Sigmoid colon (tissue), 7 donors: ENCODE measurements at regions of chr17 and their contacts with region 1.

Region 1: GRCh38 chr17:75904749-75905521 is at the start of gene MRPL38:
- DNase-seq: peak; percentile 97
- H3K4me3 ChIP-seq: peak within 1 kb of the TSS; percentile 71 to 83 (median 81)
- H3K27ac ChIP-seq: peak within 1 kb of the TSS; percentile 86 to 93 (median 90)
- H3K4me1 ChIP-seq: peaks cover 0 to 19% (median 13%) of the 10 kb centered on the region in 4 donors
- H3K27me3 ChIP-seq: no peaks in the 10 kb centered on the region
- CTCF ChIP-seq: peak; percentile 96 to 99 (median 98)
- EP300 ChIP-seq: no peak
- POLR2A ChIP-seq: peak in 1 of 2 donors; percentile 50
- total RNA-seq, gene MRPL38: 32.8 to 50.6 (median 41.8) TPM

Region 2: GRCh38 chr17:75877752-75878173 is 27.2 kb before region 1 on chr17:
- intact Hi-C with region 1: no loop called
- DNase-seq: peak; percentile 88
- H3K4me3 ChIP-seq: peak overlapping the region; percentile 62 to 92 (median 80)
- H3K27ac ChIP-seq: peak overlapping the region; percentile 95 to 98 (median 97)
- H3K4me1 ChIP-seq: peaks cover 5 to 50% (median 46%) of the 10 kb centered on the region in 4 donors
- H3K27me3 ChIP-seq: no peaks in the 10 kb centered on the region
- CTCF ChIP-seq: peak; percentile 29 to 60 (median 44)
- EP300 ChIP-seq: no peak
- POLR2A ChIP-seq: no peak

Region 3: DNA sequence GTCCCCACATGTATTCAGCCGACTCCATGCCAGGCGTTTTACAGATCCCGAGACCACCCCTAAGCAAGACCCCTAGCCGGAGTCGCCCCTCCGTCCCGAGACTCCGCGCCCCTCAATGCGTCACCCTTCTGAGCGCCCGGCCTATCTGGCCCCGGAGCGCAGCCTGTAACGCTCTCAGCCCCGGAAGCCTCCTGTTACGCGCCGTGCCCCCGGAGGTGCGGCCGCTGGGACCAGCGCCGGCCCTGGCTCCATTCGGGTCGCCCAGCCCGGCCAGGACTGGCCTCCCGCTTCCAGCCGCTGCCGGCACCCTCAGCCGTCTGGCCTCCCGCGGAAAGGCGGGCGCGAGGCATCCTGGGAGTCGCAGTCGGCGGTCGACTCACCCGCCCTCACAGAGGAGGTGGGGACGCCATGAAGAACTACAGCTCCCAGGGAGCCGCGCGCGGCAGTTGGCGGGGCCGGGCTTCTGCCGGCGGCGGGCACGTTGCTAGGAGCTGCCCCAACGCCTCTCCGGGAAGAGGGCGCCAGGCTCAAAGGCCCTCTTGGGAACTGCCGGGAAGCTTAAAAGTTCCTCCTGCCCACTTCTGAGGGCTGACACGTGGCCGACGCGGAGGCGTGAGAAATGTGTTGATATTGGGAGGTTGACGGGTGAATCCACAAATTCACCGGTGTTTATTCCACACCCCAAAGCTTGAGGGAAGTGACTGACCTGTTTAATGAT is 35.9 kb after region 1 on chr17 and contains the start of gene FBF1:
- intact Hi-C with region 1: loop called (anchors 2 kb)
- DNase-seq: peak; percentile 96
- H3K4me3 ChIP-seq: peak within 1 kb of the TSS; percentile 50 to 96 (median 77)
- H3K27ac ChIP-seq: peak within 1 kb of the TSS; percentile 67 to 83 (median 80)
- H3K4me1 ChIP-seq: peaks cover 0 to 15% (median 14%) of the 10 kb centered on the region in 4 donors
- H3K27me3 ChIP-seq: no peaks in the 10 kb centered on the region
- CTCF ChIP-seq: no peak
- EP300 ChIP-seq: no peak
- POLR2A ChIP-seq: peak; percentile 58 to 72
- total RNA-seq, gene FBF1: 4.4 to 16.6 (median 6.3) TPM

Region 4: GRCh38 chr17:75978938-75979704 is 74.2 kb after region 1 on chr17 and contains the starts of genes ACOX1 and TEN1:
- intact Hi-C with region 1: loop called (anchors 2 kb)
- DNase-seq: peak; percentile 99
- H3K4me3 ChIP-seq: peak within 1 kb of the TSS; percentile 54 to 85 (median 80)
- H3K27ac ChIP-seq: peak within 1 kb of the TSS; percentile 96 to 99 (median 96)
- H3K4me1 ChIP-seq: peaks cover 0 to 40% (median 32%) of the 10 kb centered on the region in 4 donors
- H3K27me3 ChIP-seq: no peaks in the 10 kb centered on the region
- CTCF ChIP-seq: peak in 3 of 4 experiments; percentile 32 to 50 (median 35)
- EP300 ChIP-seq: no peak
- POLR2A ChIP-seq: peak; percentile 90 to 91
- total RNA-seq, gene ACOX1: 32.7 to 38.9 (median 36.5) TPM
- total RNA-seq, gene TEN1: 5.3 to 14.8 (median 7.8) TPM

Region 5: DNA sequence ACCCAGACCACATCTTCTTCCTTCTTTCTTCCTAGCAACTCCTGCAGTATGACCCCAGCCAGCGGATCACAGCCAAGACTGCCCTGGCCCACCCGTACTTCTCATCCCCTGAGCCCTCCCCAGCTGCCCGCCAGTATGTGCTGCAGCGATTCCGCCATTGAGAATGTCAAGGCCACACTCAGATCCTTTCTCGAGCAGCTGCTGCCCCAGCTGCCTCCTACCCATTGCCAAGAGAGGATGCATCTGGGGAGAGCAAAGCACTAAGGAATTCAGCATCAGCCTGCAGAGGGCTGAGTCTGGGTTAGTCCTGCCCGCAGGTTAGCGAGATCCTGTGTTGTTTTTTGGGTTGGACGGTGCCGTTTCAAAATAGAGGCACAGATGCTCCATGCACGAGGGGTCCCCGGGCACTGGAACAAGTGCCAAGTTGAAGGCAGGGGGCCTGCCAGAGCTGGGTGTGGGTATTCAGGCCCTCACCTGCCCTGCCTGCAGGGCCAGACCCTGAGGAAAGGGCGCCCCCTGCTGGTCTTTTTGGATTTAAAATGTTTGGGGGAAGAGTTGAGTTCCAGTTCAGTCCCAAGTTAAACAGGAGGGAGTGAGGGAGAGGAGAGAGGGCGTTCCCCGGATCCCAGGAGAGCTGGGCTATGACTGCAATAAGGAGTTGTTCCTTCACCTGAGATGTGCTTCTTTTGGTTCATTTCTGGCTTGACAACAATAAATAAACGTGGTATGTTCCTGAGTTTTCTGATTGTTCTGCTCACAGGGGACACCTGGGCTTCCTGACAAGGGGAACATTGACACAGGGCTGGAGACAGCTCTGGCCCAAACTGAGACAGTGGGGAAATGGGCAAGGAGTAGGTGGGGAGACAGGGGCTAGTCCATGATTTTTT is 100.6 kb after region 1 on chr17:
- intact Hi-C with region 1: loop called (anchors 1 kb)
- DNase-seq: peak; percentile 85
- H3K4me3 ChIP-seq: no peak overlapping the region
- H3K27ac ChIP-seq: no peak overlapping the region
- H3K4me1 ChIP-seq: peaks cover 0 to 10% (median 0%) of the 10 kb centered on the region in 4 donors
- H3K27me3 ChIP-seq: no peaks in the 10 kb centered on the region
- CTCF ChIP-seq: peak; percentile 45 to 63 (median 62)
- EP300 ChIP-seq: no peak
- POLR2A ChIP-seq: no peak

Region 6: GRCh38 chr17:76072148-76072858 is 167.4 kb after region 1 on chr17 and contains the start of gene SRP68:
- intact Hi-C with region 1: loop called (anchors 10 kb)
- DNase-seq: peak; percentile 95
- H3K4me3 ChIP-seq: peak within 1 kb of the TSS; percentile 59 to 90 (median 82)
- H3K27ac ChIP-seq: peak within 1 kb of the TSS; percentile 72 to 82 (median 80)
- H3K4me1 ChIP-seq: peaks cover 3 to 63% (median 55%) of the 10 kb centered on the region in 4 donors
- H3K27me3 ChIP-seq: peaks cover 32 to 40% (median 39%) of the 10 kb centered on the region in 3 donors
- CTCF ChIP-seq: no peak
- EP300 ChIP-seq: no peak
- POLR2A ChIP-seq: peak; percentile 28 to 61
- total RNA-seq, gene SRP68: 53.1 to 60.6 (median 53.8) TPM

Region 7: DNA sequence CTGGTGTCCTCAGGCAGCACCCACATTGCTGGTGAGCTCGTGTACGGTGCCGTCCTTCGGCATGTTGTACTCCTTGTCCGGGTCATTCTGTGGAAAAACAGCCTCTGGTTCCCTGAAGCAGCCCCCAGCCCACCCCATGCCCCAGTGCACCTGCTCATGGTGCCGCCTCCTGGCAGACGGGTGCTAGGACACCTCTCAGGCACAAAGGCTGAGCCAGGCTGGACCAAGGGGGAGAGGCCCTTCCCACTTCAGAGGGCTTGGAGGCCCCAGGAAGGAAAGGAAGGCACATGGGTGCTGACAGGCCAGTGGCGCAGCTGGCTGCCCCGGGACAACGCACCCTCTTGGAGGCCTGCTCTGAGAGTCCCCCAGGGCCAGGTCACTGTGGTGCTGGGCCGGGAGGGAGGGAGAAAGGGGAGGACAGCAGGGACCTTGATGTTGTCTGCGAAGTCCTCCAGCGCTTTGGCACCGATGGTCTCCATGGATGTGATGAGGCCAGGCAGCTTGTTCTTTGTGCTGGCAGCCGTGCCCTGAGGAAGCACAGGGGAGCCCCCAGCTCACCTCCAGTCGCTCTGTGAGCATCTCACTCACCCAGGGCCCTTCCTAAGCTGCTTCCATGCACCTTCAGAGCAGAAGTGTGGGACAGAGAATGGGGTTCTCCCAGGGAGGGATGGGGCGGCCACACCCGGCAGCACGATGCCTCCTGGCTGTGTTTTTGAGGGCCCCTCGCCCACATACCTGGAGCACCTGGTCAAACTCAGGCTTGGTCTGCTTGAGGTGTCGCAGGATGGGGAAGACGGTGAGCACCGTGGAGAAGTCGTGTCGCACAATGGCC is 183.3 kb after region 1 on chr17:
- intact Hi-C with region 1: no loop called
- DNase-seq: peak; percentile 35
- H3K4me3 ChIP-seq: no peak overlapping the region
- H3K27ac ChIP-seq: no peak overlapping the region
- H3K4me1 ChIP-seq: no peaks in the 10 kb centered on the region
- H3K27me3 ChIP-seq: no peaks in the 10 kb centered on the region
- CTCF ChIP-seq: no peak
- EP300 ChIP-seq: no peak
- POLR2A ChIP-seq: no peak